ENCODE measurements at regions of chr2 and their contacts with region 1.

Region 1: GRCh38 chr2:197378494-197379307 is 56.1 kb downstream of the SF3B1 start:
- DNase-seq: peak in 1 of 2 experiments; percentile 70
- H3K4me3 ChIP-seq: no peak overlapping the region
- H3K4me3 Mint-ChIP-seq: peak overlapping the region; percentile 48
- H3K27ac Mint-ChIP-seq: no peak overlapping the region
- H3K4me1 ChIP-seq: no peaks in the 10 kb centered on the region
- H3K4me1 Mint-ChIP-seq: peaks cover 7% of the 10 kb centered on the region
- H3K27me3 ChIP-seq: no peaks in the 10 kb centered on the region
- H3K27me3 Mint-ChIP-seq: peaks cover 6% of the 10 kb centered on the region
- CTCF ChIP-seq: peak; percentile 85 to 86

Region 2: GRCh38 chr2:196849895-196850294 is 528.8 kb before region 1 on chr2:
- CTCF ChIA-PET with region 1: no interaction called
- POLR2A ChIA-PET with region 1: no interaction called
- intact Hi-C with region 1: loop called (anchors 1 kb)
- DNase-seq: peak; percentile 41 to 43
- H3K4me3 ChIP-seq: no peak overlapping the region
- H3K4me3 Mint-ChIP-seq: no peak overlapping the region
- H3K27ac Mint-ChIP-seq: no peak overlapping the region
- H3K4me1 ChIP-seq: no peaks in the 10 kb centered on the region
- H3K4me1 Mint-ChIP-seq: no peaks in the 10 kb centered on the region
- H3K27me3 ChIP-seq: no peaks in the 10 kb centered on the region
- H3K27me3 Mint-ChIP-seq: no peaks in the 10 kb centered on the region
- CTCF ChIP-seq: peak; percentile 30 to 63

Region 3: DNA sequence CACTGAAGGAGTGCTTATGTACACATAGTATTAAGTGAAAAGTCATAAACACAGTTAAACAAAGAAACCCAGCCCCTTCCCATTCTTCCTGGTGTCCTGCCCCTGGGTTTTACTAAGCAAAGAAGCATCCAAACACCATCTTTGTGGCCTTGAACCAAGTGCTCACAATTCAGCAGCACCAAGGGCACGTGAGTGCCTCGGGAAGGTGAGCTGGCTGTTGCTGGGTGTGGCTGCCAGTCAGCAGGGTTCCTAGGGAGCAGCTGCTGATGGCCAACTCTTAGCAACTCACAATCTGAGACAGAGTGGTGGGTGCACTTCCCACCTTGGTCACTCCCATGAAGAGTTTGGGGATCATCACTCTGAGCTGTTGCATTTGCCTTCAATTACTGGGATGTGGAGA is 354.5 kb before region 1 on chr2:
- CTCF ChIA-PET with region 1: no interaction called
- POLR2A ChIA-PET with region 1: no interaction called
- intact Hi-C with region 1: no loop called
- DNase-seq: no peak
- H3K4me3 ChIP-seq: no peak overlapping the region
- H3K4me3 Mint-ChIP-seq: no peak overlapping the region
- H3K27ac Mint-ChIP-seq: no peak overlapping the region
- H3K4me1 ChIP-seq: no peaks in the 10 kb centered on the region
- H3K4me1 Mint-ChIP-seq: no peaks in the 10 kb centered on the region
- H3K27me3 ChIP-seq: no peaks in the 10 kb centered on the region
- H3K27me3 Mint-ChIP-seq: peaks cover 3% of the 10 kb centered on the region
- CTCF ChIP-seq: no peak

Region 4: GRCh38 chr2:197075759-197076337 is 302.9 kb before region 1 on chr2:
- CTCF ChIA-PET with region 1: no interaction called
- POLR2A ChIA-PET with region 1: no interaction called
- intact Hi-C with region 1: loop called (anchors 1 kb)
- DNase-seq: no peak
- H3K4me3 ChIP-seq: no peak overlapping the region
- H3K4me3 Mint-ChIP-seq: no peak overlapping the region
- H3K27ac Mint-ChIP-seq: no peak overlapping the region
- H3K4me1 ChIP-seq: no peaks in the 10 kb centered on the region
- H3K4me1 Mint-ChIP-seq: no peaks in the 10 kb centered on the region
- H3K27me3 ChIP-seq: no peaks in the 10 kb centered on the region
- H3K27me3 Mint-ChIP-seq: peaks cover 3% of the 10 kb centered on the region
- CTCF ChIP-seq: peak in 1 of 2 experiments; percentile 64

Region 5: GRCh38 chr2:197191177-197191939 is 187.3 kb before region 1 on chr2:
- CTCF ChIA-PET with region 1: interaction called, 5 read pairs
- POLR2A ChIA-PET with region 1: no interaction called
- intact Hi-C with region 1: loop called (anchors 1 kb)
- DNase-seq: peak in 1 of 2 experiments; percentile 46
- H3K4me3 ChIP-seq: no peak overlapping the region
- H3K4me3 Mint-ChIP-seq: no peak overlapping the region
- H3K27ac Mint-ChIP-seq: no peak overlapping the region
- H3K4me1 ChIP-seq: no peaks in the 10 kb centered on the region
- H3K4me1 Mint-ChIP-seq: no peaks in the 10 kb centered on the region
- H3K27me3 ChIP-seq: peaks cover 1% of the 10 kb centered on the region; the same call in 1 of the 2 replicates
- H3K27me3 Mint-ChIP-seq: peaks cover 12% of the 10 kb centered on the region
- CTCF ChIP-seq: peak; percentile 47 to 66

Region 6: DNA sequence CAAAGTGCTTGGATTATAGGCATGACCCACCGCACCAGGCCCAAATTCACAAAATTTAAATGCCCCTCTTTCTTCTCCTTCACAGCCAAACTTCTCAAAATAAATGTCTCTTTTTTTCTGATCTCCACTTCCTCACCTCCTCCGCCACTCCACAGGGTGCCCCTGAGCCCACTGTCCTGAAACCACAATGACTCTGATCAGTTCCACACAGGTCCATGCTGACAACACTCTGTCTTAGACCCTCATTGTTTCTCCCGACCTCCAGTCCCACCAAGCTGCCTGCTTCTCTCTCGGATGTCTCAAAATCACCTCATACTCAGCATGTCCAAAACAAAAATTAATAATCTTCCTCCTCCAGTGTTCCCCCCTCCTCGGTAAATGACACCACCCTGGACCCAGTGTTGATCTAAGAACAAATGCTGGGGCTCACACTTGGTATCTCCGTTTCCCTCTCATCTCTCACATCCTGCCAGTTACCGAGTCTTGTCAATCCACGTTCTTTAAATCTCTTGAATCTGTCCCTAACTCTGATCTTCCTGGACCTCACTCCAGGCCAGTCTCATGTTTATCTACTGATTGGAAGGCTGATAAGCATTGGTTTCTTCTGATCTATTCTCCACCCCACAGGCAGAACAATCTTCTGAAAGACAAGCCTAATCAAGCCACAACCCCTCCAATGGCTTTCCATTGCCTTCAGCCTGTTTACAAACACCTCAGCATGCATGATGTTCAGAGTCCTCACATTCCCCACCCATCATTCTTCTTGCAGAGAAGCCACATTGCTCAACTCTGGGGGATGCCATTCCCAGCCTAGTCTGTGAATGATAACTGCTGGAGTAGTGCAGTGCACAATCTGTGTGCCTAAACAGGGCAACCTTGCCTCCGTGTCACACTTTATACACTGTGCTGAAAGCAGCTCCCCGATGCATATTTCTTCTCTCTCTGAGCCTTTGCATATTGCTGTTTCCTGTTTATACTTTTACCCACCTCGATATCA is 55.7 kb before region 1 on chr2:
- CTCF ChIA-PET with region 1: no interaction called
- POLR2A ChIA-PET with region 1: no interaction called
- intact Hi-C with region 1: loop called (anchors 2 kb)
- DNase-seq: peak; percentile 46 to 62
- H3K4me3 ChIP-seq: no peak overlapping the region
- H3K4me3 Mint-ChIP-seq: no peak overlapping the region
- H3K27ac Mint-ChIP-seq: peak overlapping the region; percentile 5
- H3K4me1 ChIP-seq: peaks cover 16% of the 10 kb centered on the region
- H3K4me1 Mint-ChIP-seq: peaks cover 18% of the 10 kb centered on the region
- H3K27me3 ChIP-seq: no peaks in the 10 kb centered on the region
- H3K27me3 Mint-ChIP-seq: peaks cover 8% of the 10 kb centered on the region
- CTCF ChIP-seq: no peak